CD4-positive, alpha-beta memory T cell (primary cell): ENCODE measurements at regions of chr6 and their contacts with region 1.

Region 1: GRCh38 chr6:30616811-30617564 is at the start of gene PPP1R10:
- DNase-seq: peak; percentile 98 to 100 (median 100)
- H3K4me3 ChIP-seq: peak within 1 kb of the TSS; percentile 91 to 95
- H3K4me3 Mint-ChIP-seq: peak within 1 kb of the TSS; percentile 97 to 100 (median 100)
- H3K27ac ChIP-seq: peak within 1 kb of the TSS; percentile 94
- H3K27ac Mint-ChIP-seq: peak within 1 kb of the TSS; percentile 100
- H3K4me1 ChIP-seq: peaks cover 45% of the 10 kb centered on the region
- H3K4me1 Mint-ChIP-seq: peaks cover 22 to 62% (median 35%) of the 10 kb centered on the region in 4 donors
- H3K27me3 ChIP-seq: no peaks in the 10 kb centered on the region
- H3K27me3 Mint-ChIP-seq: peaks cover 0 to 1% of the 10 kb centered on the region in 2 donors
- total RNA-seq, gene PPP1R10: 224 to 231 TPM

Region 2: GRCh38 chr6:30066577-30067459 is 550.2 kb before region 1 on chr6 and contains the start of gene PPP1R11:
- CTCF ChIA-PET with region 1: no interaction called
- POLR2A ChIA-PET with region 1: interaction called, 6 read pairs
- intact Hi-C with region 1: loop called (anchors 5 kb)
- DNase-seq: peak; percentile 98 to 100 (median 99)
- H3K4me3 ChIP-seq: peak within 1 kb of the TSS; percentile 84 to 90
- H3K4me3 Mint-ChIP-seq: peak within 1 kb of the TSS; percentile 92 to 100 (median 97)
- H3K27ac ChIP-seq: peak within 1 kb of the TSS; percentile 99
- H3K27ac Mint-ChIP-seq: peak within 1 kb of the TSS; percentile 95 to 100 (median 99)
- H3K4me1 ChIP-seq: peaks cover 50% of the 10 kb centered on the region
- H3K4me1 Mint-ChIP-seq: peaks cover 35 to 75% (median 52%) of the 10 kb centered on the region in 4 donors
- H3K27me3 ChIP-seq: no peaks in the 10 kb centered on the region
- H3K27me3 Mint-ChIP-seq: peaks cover 4 to 6% of the 10 kb centered on the region in 2 donors
- total RNA-seq, gene PPP1R11: 65.2 to 66.2 TPM

Region 3: DNA sequence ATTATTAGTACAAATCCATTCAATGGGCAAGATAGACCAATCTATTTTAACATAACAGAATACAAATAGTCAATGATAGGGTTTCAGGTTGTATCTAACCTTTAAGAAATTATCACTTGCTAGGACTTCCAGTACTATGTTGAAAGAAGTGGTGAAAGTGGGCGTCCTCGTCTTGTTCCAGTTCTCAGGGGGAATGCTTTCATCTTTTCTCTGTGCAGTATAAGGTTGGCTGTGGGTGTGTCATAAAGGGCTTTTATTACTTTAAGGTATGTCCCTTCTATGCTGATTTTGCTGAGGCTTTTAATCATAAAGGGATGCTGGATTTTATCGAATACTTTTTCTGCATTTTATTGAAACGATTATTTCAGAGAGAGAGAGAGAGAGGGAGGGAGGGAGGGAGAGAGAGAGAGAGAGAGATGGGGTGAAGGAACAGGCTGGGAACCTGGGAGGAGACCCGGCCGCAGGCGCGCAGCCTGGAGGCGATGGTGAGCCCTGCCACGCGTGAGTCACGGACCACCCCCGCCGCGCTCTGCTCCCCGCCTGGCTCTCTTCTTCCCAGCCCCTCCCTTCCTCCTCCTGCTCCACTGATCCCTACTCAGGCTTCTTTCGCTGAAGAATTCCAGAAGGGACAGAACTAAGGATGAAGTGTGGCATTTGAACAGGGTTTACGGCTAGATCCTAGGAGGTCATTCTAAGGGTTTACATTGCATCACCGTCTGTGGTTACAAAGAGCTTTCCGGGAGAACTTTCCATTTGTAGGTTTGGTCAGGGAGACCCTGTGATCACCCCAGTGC is 173.1 kb before region 1 on chr6:
- CTCF ChIA-PET with region 1: no interaction called
- POLR2A ChIA-PET with region 1: no interaction called
- intact Hi-C with region 1: no loop called
- DNase-seq: no peak
- H3K4me3 ChIP-seq: no peak overlapping the region
- H3K4me3 Mint-ChIP-seq: no peak overlapping the region
- H3K27ac ChIP-seq: no peak overlapping the region
- H3K27ac Mint-ChIP-seq: no peak overlapping the region
- H3K4me1 ChIP-seq: no peaks in the 10 kb centered on the region
- H3K4me1 Mint-ChIP-seq: peaks cover 3 to 8% (median 4%) of the 10 kb centered on the region in 4 donors
- H3K27me3 ChIP-seq: peaks cover 84% of the 10 kb centered on the region
- H3K27me3 Mint-ChIP-seq: peaks cover 70 to 73% of the 10 kb centered on the region in 2 donors

Region 4: DNA sequence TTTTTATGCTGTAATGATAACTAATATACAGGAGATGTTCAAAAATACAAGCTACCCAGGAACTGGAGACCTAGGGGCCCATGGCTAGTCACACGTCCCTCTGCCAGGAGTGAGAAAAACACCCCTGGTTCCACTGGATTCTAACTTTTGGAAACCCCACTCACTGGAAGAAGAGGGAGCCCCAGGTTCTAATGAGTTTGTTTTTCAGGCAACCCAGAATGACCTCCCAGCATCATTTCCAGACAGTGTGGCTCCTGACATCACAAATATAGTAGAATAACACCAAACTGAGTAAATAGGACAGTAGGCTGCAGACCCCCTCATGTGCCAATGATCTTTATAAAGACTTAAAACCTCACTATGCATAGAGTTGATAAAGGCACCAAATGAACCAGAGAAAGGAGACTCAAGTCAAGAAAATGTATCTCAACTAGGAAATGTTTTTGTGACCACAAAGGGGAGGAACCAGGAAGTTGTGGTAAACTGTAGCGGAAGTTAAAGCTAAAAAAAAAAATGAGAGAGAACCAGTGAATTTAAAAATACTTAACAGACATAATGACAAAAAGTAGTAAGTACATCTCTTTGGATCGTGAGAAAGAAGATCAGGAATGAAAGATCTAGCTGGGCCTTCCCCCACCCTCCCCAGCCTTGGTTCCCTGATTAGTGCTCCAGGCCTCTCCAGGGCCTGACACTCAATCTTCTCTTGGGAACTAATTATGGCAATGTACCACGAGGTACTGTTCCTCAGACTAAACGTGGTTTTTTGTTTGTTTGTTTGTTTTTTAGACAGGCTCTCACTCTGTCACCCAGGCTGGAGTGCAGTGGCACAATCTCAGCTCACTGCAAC is 107.9 kb before region 1 on chr6:
- CTCF ChIA-PET with region 1: no interaction called
- POLR2A ChIA-PET with region 1: interaction called, 20 read pairs
- intact Hi-C with region 1: no loop called
- DNase-seq: peak; percentile 72 to 85 (median 82)
- H3K4me3 ChIP-seq: peak overlapping the region; percentile 1 to 26
- H3K4me3 Mint-ChIP-seq: peak overlapping the region; percentile 66 to 86 (median 80)
- H3K27ac ChIP-seq: peak overlapping the region; percentile 32
- H3K27ac Mint-ChIP-seq: peak overlapping the region; percentile 78 to 96 (median 89)
- H3K4me1 ChIP-seq: peaks cover 77% of the 10 kb centered on the region
- H3K4me1 Mint-ChIP-seq: peaks cover 38 to 73% (median 52%) of the 10 kb centered on the region in 4 donors
- H3K27me3 ChIP-seq: no peaks in the 10 kb centered on the region
- H3K27me3 Mint-ChIP-seq: no peaks in the 10 kb centered on the region

Region 5: DNA sequence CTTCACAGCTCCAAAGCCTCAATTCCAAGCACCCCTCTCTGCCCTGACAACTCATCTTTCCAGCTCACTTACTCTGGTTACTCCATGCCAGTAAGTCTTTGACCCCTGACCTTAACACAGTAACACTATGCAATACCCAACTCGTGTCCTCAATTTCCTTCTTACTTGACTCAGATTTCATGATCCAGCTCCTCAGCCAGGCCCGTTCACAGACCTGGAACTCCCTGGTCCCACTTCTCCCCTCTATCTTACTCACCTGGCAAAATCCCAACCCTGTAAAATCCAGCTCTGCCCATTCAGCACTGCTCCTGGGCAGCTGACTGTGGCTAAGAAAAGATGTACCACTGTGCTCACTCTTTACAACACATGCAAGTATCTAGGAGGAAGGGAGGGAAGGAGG is 68.6 kb before region 1 on chr6:
- CTCF ChIA-PET with region 1: interaction called, 34 read pairs
- POLR2A ChIA-PET with region 1: interaction called, 102 read pairs
- intact Hi-C with region 1: no loop called
- DNase-seq: no peak
- H3K4me3 ChIP-seq: no peak overlapping the region
- H3K4me3 Mint-ChIP-seq: no peak overlapping the region
- H3K27ac ChIP-seq: no peak overlapping the region
- H3K27ac Mint-ChIP-seq: peak overlapping the region; percentile 1 to 88 (median 60)
- H3K4me1 ChIP-seq: peaks cover 19% of the 10 kb centered on the region
- H3K4me1 Mint-ChIP-seq: peaks cover 14 to 21% (median 20%) of the 10 kb centered on the region in 4 donors
- H3K27me3 ChIP-seq: no peaks in the 10 kb centered on the region
- H3K27me3 Mint-ChIP-seq: no peaks in the 10 kb centered on the region

Region 6: GRCh38 chr6:30600451-30600961 is 16.5 kb before region 1 on chr6:
- CTCF ChIA-PET with region 1: interaction called, 30 read pairs
- POLR2A ChIA-PET with region 1: interaction called, 132 read pairs
- intact Hi-C with region 1: no loop called
- DNase-seq: no peak
- H3K4me3 ChIP-seq: no peak overlapping the region
- H3K4me3 Mint-ChIP-seq: no peak overlapping the region
- H3K27ac ChIP-seq: no peak overlapping the region
- H3K27ac Mint-ChIP-seq: peak overlapping the region in 2 of 7 donors; percentile 41 to 64
- H3K4me1 ChIP-seq: no peaks in the 10 kb centered on the region
- H3K4me1 Mint-ChIP-seq: peaks cover 7 to 26% (median 17%) of the 10 kb centered on the region in 4 donors
- H3K27me3 ChIP-seq: no peaks in the 10 kb centered on the region
- H3K27me3 Mint-ChIP-seq: no peaks in the 10 kb centered on the region

Region 7: GRCh38 chr6:30678964-30679726 is 62.2 kb after region 1 on chr6:
- CTCF ChIA-PET with region 1: interaction called, 9 read pairs
- POLR2A ChIA-PET with region 1: interaction called, 89 read pairs
- intact Hi-C with region 1: loop called (anchors 2 kb)
- DNase-seq: peak; percentile 87 to 92 (median 89)
- H3K4me3 ChIP-seq: peak overlapping the region; percentile 70 to 93
- H3K4me3 Mint-ChIP-seq: peak overlapping the region; percentile 97 to 100 (median 99)
- H3K27ac ChIP-seq: peak overlapping the region; percentile 94
- H3K27ac Mint-ChIP-seq: peak overlapping the region; percentile 88 to 99 (median 91)
- H3K4me1 ChIP-seq: peaks cover 38% of the 10 kb centered on the region
- H3K4me1 Mint-ChIP-seq: peaks cover 17 to 57% (median 34%) of the 10 kb centered on the region in 4 donors
- H3K27me3 ChIP-seq: no peaks in the 10 kb centered on the region
- H3K27me3 Mint-ChIP-seq: no peaks in the 10 kb centered on the region

Region 8: DNA sequence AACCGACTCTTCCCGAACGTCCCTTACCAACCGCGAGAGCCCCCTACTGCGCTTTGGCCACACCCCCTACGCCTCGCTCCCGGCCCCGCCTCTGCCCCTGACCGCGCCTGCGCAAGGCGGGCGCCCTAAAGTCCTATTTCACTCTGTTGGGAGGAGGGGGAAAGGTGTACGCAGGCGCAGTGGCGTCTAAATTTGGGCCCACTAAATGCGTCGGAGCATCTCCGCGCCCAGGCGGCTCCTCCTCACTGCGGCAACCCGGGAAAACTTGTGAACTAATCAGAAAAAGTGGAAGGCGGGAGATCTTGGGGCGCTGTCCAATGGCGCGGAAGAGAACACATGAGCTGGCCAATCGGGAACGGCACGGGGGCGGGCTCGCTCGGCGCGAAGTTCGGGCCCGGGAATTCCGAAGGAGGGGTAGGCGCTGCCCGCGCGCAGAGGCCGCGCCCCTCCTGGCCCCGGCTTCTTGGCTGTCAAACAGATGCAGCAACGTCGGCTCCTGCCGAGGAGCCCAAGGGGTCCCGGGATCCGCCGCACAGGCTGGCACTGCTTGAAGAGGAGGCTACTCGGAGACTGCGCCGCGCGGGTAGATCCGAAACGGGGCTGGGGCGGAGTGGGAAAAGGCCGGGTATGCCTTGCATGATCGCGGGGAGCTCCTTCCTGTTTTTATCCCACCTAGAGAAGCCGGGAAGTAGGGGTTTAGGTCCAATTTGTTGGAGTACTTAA is 541.3 kb after region 1 on chr6 and contains the start of gene TCF19:
- CTCF ChIA-PET with region 1: no interaction called
- POLR2A ChIA-PET with region 1: no interaction called
- intact Hi-C with region 1: loop called (anchors 2 kb)
- DNase-seq: peak; percentile 98 to 99 (median 98)
- H3K4me3 ChIP-seq: peak within 1 kb of the TSS; percentile 59 to 70
- H3K4me3 Mint-ChIP-seq: peak within 1 kb of the TSS; percentile 87 to 95 (median 90)
- H3K27ac ChIP-seq: peak within 1 kb of the TSS; percentile 69
- H3K27ac Mint-ChIP-seq: peak within 1 kb of the TSS; percentile 75 to 95 (median 93)
- H3K4me1 ChIP-seq: peaks cover 22% of the 10 kb centered on the region
- H3K4me1 Mint-ChIP-seq: peaks cover 14 to 34% (median 24%) of the 10 kb centered on the region in 4 donors
- H3K27me3 ChIP-seq: no peaks in the 10 kb centered on the region
- H3K27me3 Mint-ChIP-seq: no peaks in the 10 kb centered on the region
- total RNA-seq, gene TCF19: 9.0 to 9.9 TPM

Region 9: DNA sequence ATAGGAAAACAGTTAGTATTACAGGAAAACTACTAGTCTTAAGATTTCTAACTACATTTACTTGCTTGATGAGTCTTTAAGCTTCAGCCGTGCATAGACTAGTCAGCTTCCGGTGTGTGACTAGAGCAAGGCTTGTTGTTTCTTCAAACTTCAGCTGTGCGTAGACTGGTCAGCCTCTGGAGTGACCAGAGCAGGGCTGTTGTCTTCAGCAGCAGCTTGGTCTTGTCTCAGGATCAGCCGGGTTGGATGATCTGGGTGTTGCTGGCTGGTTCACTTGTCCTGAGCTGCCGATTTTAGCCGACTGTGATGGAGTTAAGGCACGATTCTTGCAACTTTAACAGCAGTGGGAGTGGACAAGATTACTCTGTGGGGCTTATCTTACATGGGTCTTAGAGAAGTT is 610.2 kb after region 1 on chr6:
- CTCF ChIA-PET with region 1: no interaction called
- POLR2A ChIA-PET with region 1: no interaction called
- intact Hi-C with region 1: no loop called
- DNase-seq: no peak
- H3K4me3 ChIP-seq: no peak overlapping the region
- H3K4me3 Mint-ChIP-seq: no peak overlapping the region
- H3K27ac ChIP-seq: no peak overlapping the region
- H3K27ac Mint-ChIP-seq: peak overlapping the region in 1 of 7 donors; percentile 12
- H3K4me1 ChIP-seq: no peaks in the 10 kb centered on the region
- H3K4me1 Mint-ChIP-seq: peaks cover 0 to 1% (median 0%) of the 10 kb centered on the region in 4 donors
- H3K27me3 ChIP-seq: no peaks in the 10 kb centered on the region
- H3K27me3 Mint-ChIP-seq: peaks cover 4 to 7% of the 10 kb centered on the region in 2 donors